Endothelial cell of umbilical vein (primary cell): ENCODE measurements at regions of chr14 and their contacts with region 1.

Region 1: DNA sequence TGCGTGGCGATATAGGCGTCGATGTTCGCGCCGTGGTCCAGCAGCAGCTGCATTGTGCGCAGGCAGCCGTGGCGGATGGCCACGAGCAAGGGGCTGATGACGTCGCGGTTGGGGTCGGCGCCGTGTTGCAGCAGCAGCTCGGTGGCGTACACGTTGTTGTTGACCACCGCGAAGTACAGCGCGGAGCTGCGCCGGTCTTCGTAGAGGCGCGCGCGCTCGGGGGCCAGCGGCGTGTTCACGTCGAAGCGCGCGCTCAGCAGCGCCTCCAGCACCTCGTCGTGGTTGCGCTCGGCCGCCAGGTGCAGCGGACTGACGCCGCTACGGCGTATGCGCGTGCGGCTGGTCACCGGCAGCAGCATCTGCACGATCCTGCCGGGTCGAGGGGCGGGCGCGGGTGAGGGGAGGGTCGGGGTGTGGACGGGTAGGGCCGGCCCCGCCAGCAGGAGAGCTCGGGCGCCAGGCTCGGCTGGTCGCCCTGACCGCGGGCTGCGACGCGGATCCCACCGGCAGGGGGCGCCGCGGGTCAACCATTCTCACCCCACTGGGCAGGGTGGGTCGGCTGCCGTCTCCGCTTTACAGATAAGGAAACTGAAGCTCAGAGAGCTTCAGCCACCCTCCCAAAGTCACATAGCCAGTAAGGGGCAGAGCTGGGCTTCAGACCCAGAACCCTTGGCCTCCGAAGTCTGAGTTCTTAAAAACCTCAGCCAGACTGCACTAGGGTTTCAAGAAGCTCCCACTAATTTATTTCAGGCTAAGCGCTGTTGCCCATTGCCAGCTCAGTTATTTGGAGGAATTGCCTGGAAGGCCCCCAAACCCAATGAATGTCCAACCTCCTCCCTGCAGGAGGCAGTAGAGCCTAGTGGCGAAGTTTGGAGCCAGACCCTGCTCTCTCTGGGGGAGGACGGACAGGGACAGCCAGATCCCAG is 12.4 kb downstream of the FAM181A start:
- DNase-seq: peak; percentile 53
- H3K4me3 ChIP-seq: no peak overlapping the region
- H3K27ac ChIP-seq: no peak overlapping the region
- H3K4me1 ChIP-seq: no peaks in the 10 kb centered on the region
- H3K27me3 ChIP-seq: peaks cover 0 to 3% of the 10 kb centered on the region in 2 experiments
- CTCF ChIP-seq: peak; percentile 74 to 77
- POLR2A ChIP-seq: no peak

Region 2: GRCh38 chr14:93953263-93953662 is 13.7 kb after region 1 on chr14:
- CTCF ChIA-PET with region 1: interaction called, 60 read pairs
- POLR2A ChIA-PET with region 1: interaction called, 4 read pairs
- dilution Hi-C with region 1: no loop called
- intact Hi-C with region 1: no loop called
- DNase-seq: no peak
- H3K4me3 ChIP-seq: no peak overlapping the region
- H3K27ac ChIP-seq: no peak overlapping the region
- H3K4me1 ChIP-seq: no peaks in the 10 kb centered on the region
- H3K27me3 ChIP-seq: no peaks in the 10 kb centered on the region
- CTCF ChIP-seq: no peak
- POLR2A ChIP-seq: no peak

Region 3: DNA sequence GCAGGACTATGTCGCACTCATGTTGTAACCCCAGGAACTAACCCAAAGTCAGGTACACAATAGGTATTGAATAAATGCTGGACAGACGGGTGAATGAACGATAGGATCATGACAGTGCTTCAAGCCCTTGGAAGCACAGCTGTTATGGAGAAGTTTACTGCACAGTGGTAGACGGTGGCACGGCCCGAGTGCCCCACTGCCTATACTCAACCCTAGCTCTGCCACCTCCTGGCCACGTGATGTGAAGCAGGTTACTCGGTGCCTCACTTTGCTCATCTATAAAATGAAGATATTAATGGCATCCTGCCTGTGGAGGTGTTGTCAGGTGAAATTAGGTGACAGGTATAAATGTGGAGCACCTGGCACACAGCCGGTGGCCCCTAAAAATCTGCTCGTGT is 31.0 kb after region 1 on chr14:
- CTCF ChIA-PET with region 1: interaction called, 116 read pairs
- POLR2A ChIA-PET with region 1: no interaction called
- dilution Hi-C with region 1: no loop called
- intact Hi-C with region 1: no loop called
- DNase-seq: no peak
- H3K4me3 ChIP-seq: no peak overlapping the region
- H3K27ac ChIP-seq: no peak overlapping the region
- H3K4me1 ChIP-seq: no peaks in the 10 kb centered on the region
- H3K27me3 ChIP-seq: no peaks in the 10 kb centered on the region
- CTCF ChIP-seq: no peak
- POLR2A ChIP-seq: no peak

Region 4: DNA sequence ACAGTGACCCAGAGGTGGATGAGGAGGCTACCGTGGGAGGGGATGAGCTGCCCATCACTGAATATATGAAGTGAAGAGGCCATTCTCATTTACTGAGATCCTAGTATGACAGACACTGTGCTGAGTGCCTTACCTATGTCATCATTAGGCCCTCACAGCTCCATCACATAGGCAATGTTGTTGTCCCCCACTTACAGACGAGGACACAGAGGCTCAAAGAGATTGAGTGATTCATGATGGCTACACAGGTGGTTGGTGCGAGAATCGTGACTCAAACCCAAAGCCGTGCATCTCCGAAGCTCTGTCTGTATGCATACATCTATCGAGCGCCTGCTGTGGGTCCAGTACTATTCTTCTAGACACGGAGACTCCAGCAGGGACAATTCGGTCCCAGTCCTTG is 51.6 kb after region 1 on chr14:
- CTCF ChIA-PET with region 1: interaction called, 368 read pairs
- POLR2A ChIA-PET with region 1: no interaction called
- dilution Hi-C with region 1: no loop called
- intact Hi-C with region 1: no loop called
- DNase-seq: no peak
- H3K4me3 ChIP-seq: no peak overlapping the region
- H3K27ac ChIP-seq: no peak overlapping the region
- H3K4me1 ChIP-seq: no peaks in the 10 kb centered on the region
- H3K27me3 ChIP-seq: no peaks in the 10 kb centered on the region
- CTCF ChIP-seq: no peak
- POLR2A ChIP-seq: no peak

Region 5: DNA sequence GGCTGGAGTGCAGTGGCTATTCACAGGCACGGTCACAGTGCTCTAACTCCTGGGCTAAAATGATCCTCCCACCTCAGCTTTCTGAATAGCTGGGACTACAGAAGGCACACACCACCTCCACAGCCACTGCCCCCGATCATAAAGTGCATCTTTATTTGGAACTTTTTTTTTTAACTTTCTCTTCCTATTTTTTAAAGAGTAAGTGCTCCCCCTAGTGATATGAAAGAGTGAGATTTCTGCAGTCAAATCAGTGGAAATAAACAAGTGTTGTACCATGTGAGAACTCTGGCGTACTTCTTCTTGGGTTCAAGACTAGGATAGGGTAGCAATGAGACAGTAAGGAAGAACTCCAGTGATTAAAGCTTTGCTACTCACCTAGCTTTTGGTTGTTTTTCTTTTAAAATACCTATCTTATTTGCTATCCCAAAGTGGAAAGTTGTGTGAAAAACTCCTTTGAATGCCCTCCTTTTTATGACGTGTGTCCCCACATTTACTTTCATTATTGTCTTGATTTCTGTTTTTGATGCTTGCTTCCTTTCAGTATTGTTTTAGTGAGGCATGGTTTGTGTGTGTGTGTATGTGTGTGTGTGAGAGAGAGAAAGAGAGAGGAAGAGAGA is 241.2 kb after region 1 on chr14:
- CTCF ChIA-PET with region 1: interaction called, 6 read pairs
- POLR2A ChIA-PET with region 1: no interaction called
- dilution Hi-C with region 1: no loop called
- intact Hi-C with region 1: loop called (anchors 1 kb)
- DNase-seq: peak; percentile 48
- H3K4me3 ChIP-seq: no peak overlapping the region
- H3K27ac ChIP-seq: no peak overlapping the region
- H3K4me1 ChIP-seq: no peaks in the 10 kb centered on the region
- H3K27me3 ChIP-seq: peaks cover 22 to 54% of the 10 kb centered on the region in 2 experiments
- CTCF ChIP-seq: peak; percentile 30 to 40
- POLR2A ChIP-seq: no peak